ENCODE measurements at regions of chr11 and their contacts with region 1.

Region 1: GRCh38 chr11:45846974-45847910 is at the start of gene CRY2:
- DNase-seq: peak; percentile 100
- H3K4me3 ChIP-seq: peak within 1 kb of the TSS; percentile 80
- H3K4me3 Mint-ChIP-seq: peak within 1 kb of the TSS; percentile 81
- H3K27ac Mint-ChIP-seq: peak within 1 kb of the TSS; percentile 86
- H3K4me1 ChIP-seq: peaks cover 18% of the 10 kb centered on the region
- H3K4me1 Mint-ChIP-seq: peaks cover 26% of the 10 kb centered on the region
- H3K27me3 ChIP-seq: no peaks in the 10 kb centered on the region
- H3K27me3 Mint-ChIP-seq: no peaks in the 10 kb centered on the region
- CTCF ChIP-seq: no peak
- total RNA-seq, gene CRY2: 28.5 and 31.6 TPM in 2 replicates

Region 2: DNA sequence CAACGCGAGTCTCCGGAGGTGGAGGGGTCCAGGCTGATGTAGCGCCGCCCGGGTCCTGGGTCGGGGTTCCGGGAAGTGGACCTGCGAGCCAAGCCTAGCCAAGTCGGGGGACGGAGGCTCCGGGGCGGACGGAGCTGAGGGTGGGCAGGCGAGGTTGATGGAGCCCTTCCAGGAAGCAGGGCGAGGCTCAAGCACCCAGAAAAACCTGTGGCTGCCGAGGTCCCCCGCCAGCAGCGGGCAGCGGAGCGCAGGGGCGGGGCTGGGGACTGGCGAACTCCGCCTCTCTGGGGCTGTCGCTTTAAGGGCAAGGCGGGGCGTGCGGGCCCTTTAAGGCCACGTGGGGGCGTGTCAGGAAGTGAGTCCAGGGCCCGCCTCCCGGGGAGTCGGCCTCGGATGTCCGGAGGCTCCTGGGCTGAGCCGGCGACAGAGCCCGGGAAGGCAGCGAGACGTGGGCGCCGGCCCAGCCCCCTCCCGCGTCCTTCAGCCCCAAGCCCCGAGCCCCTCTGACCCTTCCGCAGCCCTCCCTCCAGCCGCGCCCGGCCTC is 42.4 kb before region 1 on chr11 and contains the start of gene SLC35C1:
- CTCF ChIA-PET with region 1: interaction called, 3 read pairs
- POLR2A ChIA-PET with region 1: interaction called, 11 read pairs
- intact Hi-C with region 1: loop called (anchors 1 kb)
- DNase-seq: peak; percentile 97 to 99
- H3K4me3 ChIP-seq: peak within 1 kb of the TSS; percentile 96
- H3K4me3 Mint-ChIP-seq: peak within 1 kb of the TSS; percentile 99
- H3K27ac Mint-ChIP-seq: peak within 1 kb of the TSS; percentile 75
- H3K4me1 ChIP-seq: peaks cover 13% of the 10 kb centered on the region
- H3K4me1 Mint-ChIP-seq: peaks cover 12% of the 10 kb centered on the region
- H3K27me3 ChIP-seq: no peaks in the 10 kb centered on the region
- H3K27me3 Mint-ChIP-seq: no peaks in the 10 kb centered on the region
- CTCF ChIP-seq: peak in 1 of 2 experiments; percentile 13
- total RNA-seq, gene SLC35C1: 14.0 and 15.1 TPM in 2 replicates

Region 3: GRCh38 chr11:45885274-45885920 is 38.2 kb after region 1 on chr11 and contains the start of gene MAPK8IP1:
- CTCF ChIA-PET with region 1: no interaction called
- POLR2A ChIA-PET with region 1: no interaction called
- intact Hi-C with region 1: loop called (anchors 1 kb)
- DNase-seq: peak; percentile 67 to 79
- H3K4me3 ChIP-seq: peak within 1 kb of the TSS; percentile 56
- H3K4me3 Mint-ChIP-seq: peak within 1 kb of the TSS; percentile 63
- H3K27ac Mint-ChIP-seq: peak within 1 kb of the TSS; percentile 43
- H3K4me1 ChIP-seq: peaks cover 4% of the 10 kb centered on the region; the same call in 1 of the 2 replicates
- H3K4me1 Mint-ChIP-seq: no peaks in the 10 kb centered on the region
- H3K27me3 ChIP-seq: no peaks in the 10 kb centered on the region
- H3K27me3 Mint-ChIP-seq: no peaks in the 10 kb centered on the region
- CTCF ChIP-seq: peak in 1 of 2 experiments; percentile 10
- total RNA-seq, gene MAPK8IP1: 8.2 and 8.5 TPM in 2 replicates

Region 4: DNA sequence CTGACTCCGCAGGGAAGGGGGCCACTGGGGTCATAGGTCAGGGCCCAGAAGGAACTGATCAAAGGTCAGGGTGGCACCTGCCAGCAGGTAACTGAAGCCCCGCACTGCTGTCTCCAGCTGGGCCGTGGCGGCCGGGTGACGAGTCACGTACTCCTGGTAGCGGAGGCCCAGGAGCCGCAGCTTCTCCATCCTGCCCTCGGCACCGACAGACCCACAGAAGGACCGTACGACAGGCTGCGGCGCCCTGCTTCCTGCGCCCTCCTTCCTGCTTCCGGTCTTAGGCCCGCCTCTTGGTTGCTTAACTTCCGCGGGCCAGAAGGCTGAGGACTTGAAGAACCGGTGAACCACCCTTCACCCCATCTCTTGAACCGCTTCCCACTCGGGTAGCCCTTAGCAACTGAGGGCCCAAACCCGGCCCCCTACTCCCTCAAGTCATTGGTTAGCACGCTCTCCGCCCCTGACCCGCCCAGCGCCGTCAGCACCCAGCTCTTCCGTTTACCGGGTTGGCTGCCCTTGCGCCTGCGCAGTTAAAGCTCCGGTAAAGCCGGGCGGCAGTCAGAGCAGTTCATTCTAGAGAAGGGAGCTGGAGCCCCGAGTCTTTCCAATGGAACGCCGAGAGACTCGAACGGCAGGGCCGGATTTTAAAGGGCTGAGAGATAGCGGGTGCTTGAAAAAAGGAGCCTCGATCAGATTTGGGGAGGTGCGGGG is 70.5 kb after region 1 on chr11 and contains the start of gene PEX16:
- CTCF ChIA-PET with region 1: no interaction called
- POLR2A ChIA-PET with region 1: interaction called, 6 read pairs
- intact Hi-C with region 1: loop called (anchors 1 kb)
- DNase-seq: peak; percentile 98 to 99
- H3K4me3 ChIP-seq: peak within 1 kb of the TSS; percentile 92
- H3K4me3 Mint-ChIP-seq: peak within 1 kb of the TSS; percentile 83
- H3K27ac Mint-ChIP-seq: peak within 1 kb of the TSS; percentile 99
- H3K4me1 ChIP-seq: peaks cover 17% of the 10 kb centered on the region
- H3K4me1 Mint-ChIP-seq: peaks cover 6% of the 10 kb centered on the region
- H3K27me3 ChIP-seq: no peaks in the 10 kb centered on the region
- H3K27me3 Mint-ChIP-seq: no peaks in the 10 kb centered on the region
- CTCF ChIP-seq: no peak
- total RNA-seq, gene PEX16: 41.4 and 45.8 TPM in 2 replicates